ENCODE measurements at regions of chr11 and their contacts with region 1.

Region 1: GRCh38 chr11:3037040-3037944 is 19.9 kb downstream of the CARS1 start:
- DNase-seq: peak; percentile 51 to 91 (median 74)
- ATAC-seq: peak; percentile 90
- H3K4me3 ChIP-seq: no peak overlapping the region
- H3K27ac ChIP-seq: peak overlapping the region in 1 of 2 donors; percentile 38
- H3K4me1 ChIP-seq: peaks cover 0 to 31% of the 10 kb centered on the region in 2 donors
- H3K27me3 ChIP-seq: no peaks in the 10 kb centered on the region
- CTCF ChIP-seq: peak; percentile 63 to 69

Region 2: GRCh38 chr11:2930704-2931428 is 106.4 kb before region 1 on chr11:
- intact Hi-C with region 1: no loop called
- DNase-seq: peak in 3 of 4 donors; percentile 76 to 94 (median 90)
- ATAC-seq: peak; percentile 79
- H3K4me3 ChIP-seq: peak overlapping the region; percentile 46 to 54
- H3K27ac ChIP-seq: peak overlapping the region; percentile 82 to 90
- H3K4me1 ChIP-seq: peaks cover 0 to 65% of the 10 kb centered on the region in 2 donors
- H3K27me3 ChIP-seq: peaks cover 0 to 47% of the 10 kb centered on the region in 2 donors
- CTCF ChIP-seq: peak; percentile 65 to 71

Region 3: GRCh38 chr11:3091791-3092602 is 54.7 kb after region 1 on chr11:
- intact Hi-C with region 1: loop called in 1 of 2 experiments (anchors 5 kb)
- DNase-seq: peak; percentile 19 to 94 (median 66)
- ATAC-seq: peak; percentile 85
- H3K4me3 ChIP-seq: no peak overlapping the region
- H3K27ac ChIP-seq: no peak overlapping the region
- H3K4me1 ChIP-seq: peaks cover 0 to 16% of the 10 kb centered on the region in 2 donors
- H3K27me3 ChIP-seq: no peaks in the 10 kb centered on the region
- CTCF ChIP-seq: peak; percentile 96 to 100

Region 4: DNA sequence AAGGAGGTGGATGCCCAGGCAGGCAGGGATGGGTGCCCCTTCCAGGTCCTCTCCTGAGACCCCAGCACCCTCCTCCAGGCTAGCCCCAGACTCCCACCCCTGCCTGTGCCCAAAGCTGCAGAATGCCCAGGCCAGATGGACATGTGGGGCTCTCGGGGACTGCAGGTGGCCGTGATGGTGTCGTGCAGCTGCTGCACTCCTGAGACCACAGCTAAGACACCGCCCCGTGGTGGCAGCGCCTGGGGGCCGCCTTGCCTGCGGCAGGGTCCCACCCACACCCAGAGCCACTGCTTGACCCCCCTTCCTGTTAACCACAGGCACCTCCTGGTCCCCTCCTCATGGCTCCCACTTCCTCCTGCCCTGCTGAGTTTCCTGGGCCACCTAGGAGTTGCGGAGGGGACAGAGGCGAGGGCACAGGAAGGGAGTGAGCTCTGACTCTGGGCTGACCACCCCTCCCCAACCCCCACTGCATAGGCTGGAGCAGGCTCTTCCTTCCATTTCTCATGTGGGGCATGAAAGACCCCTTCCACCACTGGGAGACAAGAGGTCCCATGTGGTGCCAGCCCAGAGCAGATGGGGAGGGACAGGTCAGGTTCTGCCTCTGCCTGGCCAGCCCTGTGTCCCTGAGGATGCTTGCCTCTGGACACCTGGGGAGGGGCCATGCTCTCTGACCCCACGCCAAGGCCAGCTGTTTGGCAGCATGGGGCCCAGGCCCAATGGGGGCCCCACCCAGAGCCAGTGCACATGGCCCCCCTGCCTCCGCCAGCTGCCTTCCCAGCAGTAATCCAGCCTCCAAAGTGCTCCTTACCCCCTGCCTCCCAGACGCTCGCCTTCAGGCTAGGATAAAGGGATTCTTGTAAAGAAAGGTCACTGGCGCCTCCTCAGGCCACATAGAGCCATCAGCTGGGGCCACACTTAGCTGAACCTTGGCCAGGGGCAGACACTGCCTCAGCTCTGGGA is 98.5 kb after region 1 on chr11:
- intact Hi-C with region 1: no loop called
- DNase-seq: peak in 2 of 4 donors; percentile 30 to 64
- ATAC-seq: no peak
- H3K4me3 ChIP-seq: no peak overlapping the region
- H3K27ac ChIP-seq: peak overlapping the region in 1 of 2 donors; percentile 7
- H3K4me1 ChIP-seq: peaks cover 0 to 52% of the 10 kb centered on the region in 2 donors
- H3K27me3 ChIP-seq: no peaks in the 10 kb centered on the region
- CTCF ChIP-seq: no peak

Region 5: GRCh38 chr11:3217676-3218482 is 180.6 kb after region 1 on chr11:
- intact Hi-C with region 1: loop called in 1 of 2 experiments (anchors 5 kb)
- DNase-seq: peak in 2 of 4 donors; percentile 30 to 70
- ATAC-seq: no peak
- H3K4me3 ChIP-seq: no peak overlapping the region
- H3K27ac ChIP-seq: no peak overlapping the region
- H3K4me1 ChIP-seq: peaks cover 0 to 5% of the 10 kb centered on the region in 2 donors
- H3K27me3 ChIP-seq: peaks cover 0 to 83% of the 10 kb centered on the region in 2 donors
- CTCF ChIP-seq: no peak

Region 6: GRCh38 chr11:3245071-3245470 is 207.8 kb after region 1 on chr11:
- intact Hi-C with region 1: no loop called
- DNase-seq: no peak
- ATAC-seq: no peak
- H3K4me3 ChIP-seq: no peak overlapping the region
- H3K27ac ChIP-seq: no peak overlapping the region
- H3K4me1 ChIP-seq: no peaks in the 10 kb centered on the region
- H3K27me3 ChIP-seq: no peaks in the 10 kb centered on the region
- CTCF ChIP-seq: no peak

Measured in left lung (tissue), 14 donors.